ENCODE measurements at regions of chr5 and their contacts with region 1.

Region 1: GRCh38 chr5:131382407-131383395 is 118.8 kb downstream of the CDC42SE2 start:
- DNase-seq: peak; percentile 24 to 79 (median 72)
- H3K4me3 ChIP-seq: no peak overlapping the region
- H3K4me3 Mint-ChIP-seq: peak overlapping the region; percentile 51 to 82 (median 69)
- H3K27ac ChIP-seq: peak overlapping the region; percentile 29
- H3K27ac Mint-ChIP-seq: peak overlapping the region; percentile 94 to 99 (median 97)
- H3K4me1 ChIP-seq: peaks cover 77% of the 10 kb centered on the region
- H3K4me1 Mint-ChIP-seq: peaks cover 83 to 100% (median 93%) of the 10 kb centered on the region in 3 donors
- H3K27me3 ChIP-seq: no peaks in the 10 kb centered on the region
- H3K27me3 Mint-ChIP-seq: peaks cover 0 to 1% of the 10 kb centered on the region in 2 donors

Region 2: DNA sequence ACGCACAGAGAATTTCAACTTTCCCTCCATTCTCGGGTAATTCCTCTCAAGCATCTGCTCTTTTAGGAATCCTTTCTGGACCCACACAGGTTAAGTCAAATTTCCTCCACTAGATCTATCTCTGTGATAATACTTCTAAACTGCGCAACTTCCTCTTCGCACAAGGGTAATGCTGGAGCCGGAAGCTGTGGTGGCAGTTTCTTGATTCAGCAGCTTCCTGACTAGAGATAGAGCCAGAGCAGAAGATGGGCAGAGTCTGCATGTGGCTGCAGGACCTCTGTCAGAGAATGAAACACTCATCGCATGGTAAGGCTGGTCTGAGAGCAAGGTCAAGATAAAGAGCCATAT is 129.9 kb before region 1 on chr5:
- CTCF ChIA-PET with region 1: interaction called, 20 read pairs
- POLR2A ChIA-PET with region 1: interaction called, 6 read pairs
- DNase-seq: peak; percentile 70 to 89 (median 87)
- H3K4me3 ChIP-seq: peak overlapping the region; percentile 84
- H3K4me3 Mint-ChIP-seq: peak overlapping the region; percentile 92 to 99 (median 96)
- H3K27ac ChIP-seq: peak overlapping the region; percentile 82
- H3K27ac Mint-ChIP-seq: peak overlapping the region; percentile 88 to 99 (median 96)
- H3K4me1 ChIP-seq: peaks cover 49% of the 10 kb centered on the region
- H3K4me1 Mint-ChIP-seq: peaks cover 58 to 79% (median 73%) of the 10 kb centered on the region in 3 donors
- H3K27me3 ChIP-seq: no peaks in the 10 kb centered on the region
- H3K27me3 Mint-ChIP-seq: no peaks in the 10 kb centered on the region

Region 3: GRCh38 chr5:131272307-131272706 is 110.4 kb before region 1 on chr5:
- CTCF ChIA-PET with region 1: interaction called, 24 read pairs
- POLR2A ChIA-PET with region 1: interaction called, 15 read pairs
- DNase-seq: peak in 1 of 5 donors; percentile 25
- H3K4me3 ChIP-seq: peak overlapping the region; percentile 46
- H3K4me3 Mint-ChIP-seq: peak overlapping the region; percentile 77 to 93 (median 82)
- H3K27ac ChIP-seq: peak overlapping the region; percentile 30
- H3K27ac Mint-ChIP-seq: peak overlapping the region; percentile 88 to 99 (median 96)
- H3K4me1 ChIP-seq: peaks cover 91% of the 10 kb centered on the region
- H3K4me1 Mint-ChIP-seq: peaks cover 69 to 88% (median 80%) of the 10 kb centered on the region in 3 donors
- H3K27me3 ChIP-seq: no peaks in the 10 kb centered on the region
- H3K27me3 Mint-ChIP-seq: peaks cover 0 to 3% of the 10 kb centered on the region in 2 donors

Region 4: GRCh38 chr5:131316026-131316425 is 66.7 kb before region 1 on chr5:
- CTCF ChIA-PET with region 1: interaction called, 11 read pairs
- POLR2A ChIA-PET with region 1: no interaction called
- DNase-seq: no peak
- H3K4me3 ChIP-seq: no peak overlapping the region
- H3K4me3 Mint-ChIP-seq: peak overlapping the region in 3 of 7 donors; percentile 16 to 46 (median 31)
- H3K27ac ChIP-seq: no peak overlapping the region
- H3K27ac Mint-ChIP-seq: peak overlapping the region in 6 of 8 donors; percentile 11 to 98 (median 56)
- H3K4me1 ChIP-seq: peaks cover 46% of the 10 kb centered on the region
- H3K4me1 Mint-ChIP-seq: peaks cover 78 to 92% (median 87%) of the 10 kb centered on the region in 3 donors
- H3K27me3 ChIP-seq: no peaks in the 10 kb centered on the region
- H3K27me3 Mint-ChIP-seq: peaks cover 0 to 5% of the 10 kb centered on the region in 2 donors

Region 5: DNA sequence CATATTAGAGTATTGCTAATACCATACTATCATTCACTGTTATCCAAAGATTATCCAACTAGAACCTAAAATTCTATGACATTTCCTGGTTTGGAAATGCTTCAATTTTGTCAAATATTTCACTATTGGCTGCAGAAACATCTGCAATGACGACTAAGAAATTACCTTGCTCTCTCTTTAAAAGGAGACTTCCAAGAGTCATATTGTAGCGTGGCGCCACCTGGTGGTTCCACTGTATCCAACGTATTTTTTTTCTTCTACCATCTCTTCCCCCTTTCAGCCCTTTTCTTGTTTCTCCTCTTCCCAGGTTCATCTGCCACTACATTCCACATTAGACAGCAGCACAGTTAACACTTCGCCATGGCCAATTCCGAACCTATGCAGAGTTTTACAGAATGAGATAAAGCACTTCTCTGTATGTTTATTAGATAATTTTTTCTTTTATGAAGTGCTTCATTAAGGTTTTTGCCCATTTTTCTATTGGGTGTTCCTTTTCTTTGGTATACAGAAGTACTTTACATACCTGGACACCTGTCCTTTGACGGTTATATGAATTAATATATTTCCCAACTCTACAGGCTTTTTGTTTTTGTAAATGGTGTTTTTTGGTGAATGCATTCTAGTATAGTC is 34.7 kb after region 1 on chr5:
- CTCF ChIA-PET with region 1: interaction called, 10 read pairs
- POLR2A ChIA-PET with region 1: interaction called, 5 read pairs
- DNase-seq: peak; percentile 62 to 87 (median 75)
- H3K4me3 ChIP-seq: no peak overlapping the region
- H3K4me3 Mint-ChIP-seq: peak overlapping the region in 6 of 7 donors; percentile 3 to 77 (median 67)
- H3K27ac ChIP-seq: no peak overlapping the region
- H3K27ac Mint-ChIP-seq: peak overlapping the region; percentile 34 to 93 (median 88)
- H3K4me1 ChIP-seq: peaks cover 25% of the 10 kb centered on the region
- H3K4me1 Mint-ChIP-seq: peaks cover 35 to 52% (median 50%) of the 10 kb centered on the region in 3 donors
- H3K27me3 ChIP-seq: no peaks in the 10 kb centered on the region
- H3K27me3 Mint-ChIP-seq: no peaks in the 10 kb centered on the region

Region 6: DNA sequence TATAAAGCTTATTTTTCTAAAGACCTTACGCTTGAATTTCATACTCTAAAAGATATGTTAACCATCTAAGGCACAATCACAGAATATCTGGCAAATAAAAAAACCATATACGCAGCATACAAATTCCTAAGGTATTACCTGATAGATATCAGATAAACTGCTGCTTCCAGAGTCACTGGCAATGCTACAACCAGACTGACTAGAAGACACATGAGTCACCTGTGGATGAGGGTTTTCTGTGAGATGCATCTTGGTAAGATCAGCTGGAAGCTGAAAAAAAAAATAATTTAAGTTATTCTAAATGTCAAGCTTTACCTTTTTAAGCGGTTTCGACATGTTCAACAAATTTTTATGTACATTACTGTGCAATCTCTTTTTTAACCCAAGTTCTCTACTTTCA is 138.6 kb after region 1 on chr5:
- CTCF ChIA-PET with region 1: no interaction called
- POLR2A ChIA-PET with region 1: no interaction called
- DNase-seq: no peak
- H3K4me3 ChIP-seq: no peak overlapping the region
- H3K4me3 Mint-ChIP-seq: no peak overlapping the region
- H3K27ac ChIP-seq: no peak overlapping the region
- H3K27ac Mint-ChIP-seq: no peak overlapping the region
- H3K4me1 ChIP-seq: peaks cover 48% of the 10 kb centered on the region
- H3K4me1 Mint-ChIP-seq: peaks cover 50 to 70% (median 62%) of the 10 kb centered on the region in 3 donors
- H3K27me3 ChIP-seq: no peaks in the 10 kb centered on the region
- H3K27me3 Mint-ChIP-seq: no peaks in the 10 kb centered on the region

Measured in CD8-positive, alpha-beta memory T cell (primary cell).